Caco-2 (cell line): ENCODE measurements at regions of chr4 and their contacts with region 1.

Region 1: DNA sequence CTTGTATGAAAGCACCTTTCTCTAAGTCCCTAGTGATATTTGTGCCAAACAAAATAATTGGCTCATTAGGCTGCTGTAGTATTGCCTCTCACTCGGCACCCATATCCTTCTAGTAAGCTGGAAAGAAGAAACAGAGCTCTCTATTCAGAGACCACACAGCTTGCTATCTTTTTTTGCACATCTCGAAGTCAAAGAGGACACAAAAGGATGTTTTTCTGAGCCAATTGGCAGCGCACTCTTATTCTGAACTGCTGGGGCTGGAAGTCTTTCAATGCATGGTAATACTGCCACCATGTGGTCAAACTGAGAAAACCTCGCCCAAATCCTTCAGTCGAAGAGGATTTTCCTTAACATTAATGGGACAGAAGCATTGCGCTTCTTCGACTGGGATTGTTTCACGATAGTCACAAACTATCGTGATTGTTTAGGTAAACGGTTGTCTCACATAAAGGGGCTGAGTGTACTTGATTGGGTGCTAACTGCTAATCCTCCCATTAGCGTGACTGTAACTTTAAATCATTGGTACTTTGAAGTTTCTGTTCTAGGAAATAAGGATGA is 572.0 kb upstream of the LCORL start:
- DNase-seq: peak; percentile 48 to 61
- H3K4me3 ChIP-seq: no peak overlapping the region
- H3K4me3 Mint-ChIP-seq: peak overlapping the region; percentile 29
- H3K27ac Mint-ChIP-seq: no peak overlapping the region
- H3K4me1 ChIP-seq: no peaks in the 10 kb centered on the region
- H3K4me1 Mint-ChIP-seq: peaks cover 5% of the 10 kb centered on the region
- H3K27me3 ChIP-seq: no peaks in the 10 kb centered on the region
- H3K27me3 Mint-ChIP-seq: peaks cover 11% of the 10 kb centered on the region
- CTCF ChIP-seq: peak; percentile 61 to 69

Region 2: DNA sequence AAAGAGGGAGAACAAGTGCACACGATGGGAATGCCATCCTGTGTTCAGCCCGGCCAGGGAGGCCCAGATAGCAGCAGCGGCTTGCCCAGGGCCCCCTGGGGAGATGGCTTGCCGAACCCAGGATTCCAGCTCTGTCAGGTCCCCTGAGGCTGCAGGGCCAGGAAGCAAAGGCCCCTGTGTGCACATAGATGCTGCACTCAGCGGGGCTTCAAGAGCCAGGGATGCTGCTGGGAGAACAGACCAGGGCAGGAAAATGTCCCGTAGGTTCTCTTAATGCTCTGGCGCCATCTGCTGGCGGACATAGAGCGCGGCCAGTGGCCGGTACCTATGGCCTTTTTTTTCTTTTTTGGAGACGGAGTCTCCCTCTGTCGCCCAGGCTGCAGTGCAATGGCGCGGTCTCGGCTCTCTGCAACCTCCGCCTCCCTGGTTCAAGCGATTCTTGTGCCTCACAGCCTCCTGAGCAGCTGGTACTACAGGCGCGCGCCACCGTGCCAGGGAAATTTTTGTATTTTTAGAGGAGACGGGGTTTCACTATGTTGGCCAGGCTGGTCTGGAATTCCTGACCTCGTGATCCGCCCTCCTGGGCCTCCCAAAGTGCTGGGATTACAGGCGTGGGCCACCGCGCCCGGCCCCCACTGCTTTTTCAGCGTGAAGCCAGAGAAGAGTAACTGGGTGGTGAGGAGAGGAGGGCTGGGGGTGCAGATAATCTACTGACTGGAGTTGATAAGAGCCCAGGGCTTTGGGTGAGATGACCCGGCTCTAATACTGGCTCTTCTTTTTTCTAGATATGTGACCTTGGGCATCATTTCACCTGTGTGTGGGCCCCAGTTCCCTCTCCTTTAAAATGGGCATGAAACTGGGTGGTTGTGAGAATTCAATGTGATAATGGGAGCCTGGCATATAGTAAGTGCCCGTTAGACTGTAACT is 956.6 kb before region 1 on chr4:
- CTCF ChIA-PET with region 1: no interaction called
- POLR2A ChIA-PET with region 1: no interaction called
- intact Hi-C with region 1: loop called (anchors 5 kb)
- DNase-seq: peak; percentile 73 to 78
- H3K4me3 ChIP-seq: no peak overlapping the region
- H3K4me3 Mint-ChIP-seq: no peak overlapping the region
- H3K27ac Mint-ChIP-seq: no peak overlapping the region
- H3K4me1 ChIP-seq: no peaks in the 10 kb centered on the region
- H3K4me1 Mint-ChIP-seq: no peaks in the 10 kb centered on the region
- H3K27me3 ChIP-seq: no peaks in the 10 kb centered on the region
- H3K27me3 Mint-ChIP-seq: no peaks in the 10 kb centered on the region
- CTCF ChIP-seq: peak; percentile 83 to 90

Region 3: DNA sequence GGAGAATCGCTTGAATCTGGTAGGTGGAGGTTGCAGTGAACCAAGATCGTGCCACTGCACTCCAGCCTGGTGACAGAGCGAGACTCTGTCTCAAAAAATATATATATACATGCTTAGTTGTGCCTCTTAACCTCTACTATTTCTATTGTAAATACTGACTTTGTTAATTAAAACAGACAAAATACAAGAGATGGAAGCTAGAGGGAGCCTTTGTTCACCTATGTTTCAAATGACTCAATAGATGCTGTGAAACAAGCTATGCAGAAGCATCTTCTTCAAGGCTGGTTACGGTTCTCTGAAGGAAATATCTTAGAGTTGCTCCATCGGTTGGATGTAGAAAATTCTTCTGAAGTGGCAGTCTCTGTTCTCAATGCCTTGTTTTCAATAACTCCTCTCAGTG is 776.5 kb before region 1 on chr4:
- CTCF ChIA-PET with region 1: no interaction called
- POLR2A ChIA-PET with region 1: no interaction called
- intact Hi-C with region 1: loop called (anchors 1 kb)
- DNase-seq: peak in 1 of 2 experiments; percentile 18
- H3K4me3 ChIP-seq: no peak overlapping the region
- H3K4me3 Mint-ChIP-seq: no peak overlapping the region
- H3K27ac Mint-ChIP-seq: no peak overlapping the region
- H3K4me1 ChIP-seq: peaks cover 5% of the 10 kb centered on the region; the same call in 1 of the 2 replicates
- H3K4me1 Mint-ChIP-seq: peaks cover 4% of the 10 kb centered on the region
- H3K27me3 ChIP-seq: no peaks in the 10 kb centered on the region
- H3K27me3 Mint-ChIP-seq: no peaks in the 10 kb centered on the region
- CTCF ChIP-seq: peak; percentile 17 to 38

Region 4: DNA sequence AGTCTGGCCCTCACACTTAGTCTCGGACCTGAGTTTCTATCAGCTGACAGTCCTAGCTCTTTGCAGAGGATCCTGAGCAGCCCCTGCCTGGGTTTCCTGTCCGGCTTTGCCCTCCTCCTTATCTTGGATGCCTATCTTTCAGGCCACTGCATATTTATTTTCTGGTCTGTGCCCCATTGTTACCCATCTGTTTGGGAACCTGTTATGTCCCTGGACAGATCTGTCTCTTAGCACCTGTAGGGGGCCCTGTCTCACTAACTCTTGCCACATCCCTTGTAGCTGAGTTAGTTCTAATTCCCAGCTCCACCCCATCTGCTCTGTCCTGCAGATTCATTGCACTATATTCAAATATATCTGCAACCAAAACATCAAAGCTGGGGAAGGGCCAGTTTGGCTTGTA is 57.1 kb before region 1 on chr4:
- CTCF ChIA-PET with region 1: no interaction called
- POLR2A ChIA-PET with region 1: no interaction called
- intact Hi-C with region 1: loop called (anchors 2 kb)
- DNase-seq: no peak
- H3K4me3 ChIP-seq: no peak overlapping the region
- H3K4me3 Mint-ChIP-seq: no peak overlapping the region
- H3K27ac Mint-ChIP-seq: no peak overlapping the region
- H3K4me1 ChIP-seq: no peaks in the 10 kb centered on the region
- H3K4me1 Mint-ChIP-seq: peaks cover 5% of the 10 kb centered on the region
- H3K27me3 ChIP-seq: no peaks in the 10 kb centered on the region
- H3K27me3 Mint-ChIP-seq: peaks cover 4% of the 10 kb centered on the region
- CTCF ChIP-seq: no peak